ENCODE measurements at regions of chr1 and their contacts with region 1.

Region 1: GRCh38 chr1:208641579-208642280 is 397.5 kb upstream of the PLXNA2 start:
- DNase-seq: no peak
- ATAC-seq: no peak
- H3K4me3 ChIP-seq: no peak overlapping the region
- H3K27ac ChIP-seq: no peak overlapping the region
- H3K4me1 ChIP-seq: no peaks in the 10 kb centered on the region
- H3K27me3 ChIP-seq: peaks cover 0 to 4% (median 0%) of the 10 kb centered on the region in 4 donors
- CTCF ChIP-seq: no peak

Region 2: GRCh38 chr1:208347191-208347590 is 294.5 kb before region 1 on chr1:
- intact Hi-C with region 1: no loop called
- DNase-seq: no peak
- ATAC-seq: no peak
- H3K4me3 ChIP-seq: no peak overlapping the region
- H3K27ac ChIP-seq: no peak overlapping the region
- H3K4me1 ChIP-seq: no peaks in the 10 kb centered on the region
- H3K27me3 ChIP-seq: no peaks in the 10 kb centered on the region
- CTCF ChIP-seq: no peak

Region 3: DNA sequence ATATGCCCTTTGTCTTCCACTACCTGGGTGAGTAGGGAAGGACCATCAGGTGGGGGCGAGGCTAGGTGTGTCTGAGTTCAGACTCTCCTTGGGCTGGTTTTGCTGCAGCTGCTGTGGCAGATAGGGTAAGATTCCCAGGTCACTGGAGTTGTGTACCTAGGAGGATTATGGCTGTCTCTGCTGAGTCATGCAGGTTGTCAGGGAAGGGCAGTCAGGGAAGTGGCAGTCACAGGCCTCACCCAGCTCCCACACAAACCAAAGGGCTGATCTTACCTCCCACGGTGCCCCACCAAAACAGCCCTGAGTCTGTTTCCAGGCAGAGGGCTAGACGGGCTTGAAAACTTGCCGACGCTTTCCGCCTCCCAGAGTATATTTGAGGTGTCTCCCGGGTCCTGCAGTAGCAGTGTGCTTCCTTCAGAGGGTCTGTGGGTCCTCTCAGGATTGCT is 195.9 kb before region 1 on chr1:
- intact Hi-C with region 1: no loop called
- DNase-seq: no peak
- ATAC-seq: no peak
- H3K4me3 ChIP-seq: no peak overlapping the region
- H3K27ac ChIP-seq: no peak overlapping the region
- H3K4me1 ChIP-seq: no peaks in the 10 kb centered on the region
- H3K27me3 ChIP-seq: no peaks in the 10 kb centered on the region
- CTCF ChIP-seq: no peak

Region 4: DNA sequence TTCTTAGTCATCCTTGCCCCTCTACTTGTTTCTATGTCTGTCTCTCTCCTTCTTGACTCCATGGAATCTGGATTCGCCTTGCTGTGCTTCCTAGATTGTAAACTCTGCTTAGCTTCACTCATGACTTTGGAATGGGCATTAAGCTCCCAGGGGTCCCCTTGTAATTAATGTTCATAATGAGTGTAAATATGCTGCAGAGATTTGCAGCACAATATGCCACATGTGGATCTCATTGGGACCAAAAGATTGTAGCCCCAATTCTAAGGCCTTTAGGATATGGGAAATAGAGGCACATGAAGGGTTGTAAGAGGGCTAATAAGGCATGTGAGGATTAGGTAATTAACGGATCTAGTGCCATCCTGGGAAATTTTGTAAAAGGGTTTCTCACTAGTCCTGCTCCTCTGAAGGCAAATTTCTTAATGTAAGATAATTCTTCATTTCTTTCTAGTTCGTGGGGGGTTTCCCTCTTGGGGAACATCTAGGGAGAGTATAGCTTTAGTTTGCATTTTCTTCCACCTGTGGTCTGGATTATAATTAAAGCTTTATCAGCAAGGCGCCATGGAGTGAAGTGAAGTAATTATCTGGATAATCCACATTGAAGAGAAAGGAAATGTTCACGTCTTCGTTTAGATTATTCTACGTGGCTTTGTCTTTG is 261.6 kb after region 1 on chr1:
- intact Hi-C with region 1: no loop called
- DNase-seq: no peak
- ATAC-seq: no peak
- H3K4me3 ChIP-seq: no peak overlapping the region
- H3K27ac ChIP-seq: no peak overlapping the region
- H3K4me1 ChIP-seq: no peaks in the 10 kb centered on the region
- H3K27me3 ChIP-seq: no peaks in the 10 kb centered on the region
- CTCF ChIP-seq: no peak

Region 5: DNA sequence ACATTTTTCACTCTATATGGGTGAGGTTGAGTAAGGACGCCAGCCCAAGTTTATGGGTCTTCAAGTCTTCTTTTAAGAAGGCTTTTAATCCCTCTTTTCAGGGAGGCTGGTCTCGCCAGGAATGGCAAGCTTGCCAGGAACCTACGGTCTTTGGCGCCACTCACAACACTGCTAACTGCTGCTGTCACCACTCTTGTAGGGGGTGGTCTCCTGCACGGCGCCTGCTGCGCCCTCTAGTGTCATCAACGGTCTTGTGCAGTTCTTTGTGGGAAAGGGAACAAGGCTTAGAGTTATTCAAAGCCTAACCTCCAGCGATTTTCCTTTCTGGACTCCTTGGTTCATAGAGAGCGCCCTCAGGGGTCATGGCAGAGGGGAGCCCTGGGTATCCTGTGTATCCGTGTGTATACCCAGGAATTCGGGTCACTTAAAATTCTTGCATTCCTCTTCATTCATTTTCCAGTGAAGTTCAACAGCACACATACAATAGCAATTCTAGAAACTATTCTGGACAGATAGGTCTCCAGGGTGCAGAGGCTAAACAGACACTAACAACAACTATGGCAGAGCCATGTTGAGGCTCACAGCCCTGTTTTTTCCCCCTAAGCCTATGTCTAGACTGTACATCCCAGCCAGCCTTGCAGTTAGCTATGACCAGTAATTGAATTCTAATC is 549.0 kb after region 1 on chr1:
- intact Hi-C with region 1: loop called in 1 of 3 experiments (anchors 10 kb)
- DNase-seq: peak; percentile 29 to 80 (median 70)
- ATAC-seq: peak; percentile 89 to 100 (median 96)
- H3K4me3 ChIP-seq: no peak overlapping the region
- H3K27ac ChIP-seq: no peak overlapping the region
- H3K4me1 ChIP-seq: peaks cover 0 to 5% (median 0%) of the 10 kb centered on the region in 3 donors
- H3K27me3 ChIP-seq: no peaks in the 10 kb centered on the region
- CTCF ChIP-seq: peak; percentile 41 to 59 (median 51)